Activated B cell treated with CpG ODN at 0.5 μM for 24 hours (primary cell): ENCODE measurements at regions of chr7 and their contacts with region 1.

Region 1: DNA sequence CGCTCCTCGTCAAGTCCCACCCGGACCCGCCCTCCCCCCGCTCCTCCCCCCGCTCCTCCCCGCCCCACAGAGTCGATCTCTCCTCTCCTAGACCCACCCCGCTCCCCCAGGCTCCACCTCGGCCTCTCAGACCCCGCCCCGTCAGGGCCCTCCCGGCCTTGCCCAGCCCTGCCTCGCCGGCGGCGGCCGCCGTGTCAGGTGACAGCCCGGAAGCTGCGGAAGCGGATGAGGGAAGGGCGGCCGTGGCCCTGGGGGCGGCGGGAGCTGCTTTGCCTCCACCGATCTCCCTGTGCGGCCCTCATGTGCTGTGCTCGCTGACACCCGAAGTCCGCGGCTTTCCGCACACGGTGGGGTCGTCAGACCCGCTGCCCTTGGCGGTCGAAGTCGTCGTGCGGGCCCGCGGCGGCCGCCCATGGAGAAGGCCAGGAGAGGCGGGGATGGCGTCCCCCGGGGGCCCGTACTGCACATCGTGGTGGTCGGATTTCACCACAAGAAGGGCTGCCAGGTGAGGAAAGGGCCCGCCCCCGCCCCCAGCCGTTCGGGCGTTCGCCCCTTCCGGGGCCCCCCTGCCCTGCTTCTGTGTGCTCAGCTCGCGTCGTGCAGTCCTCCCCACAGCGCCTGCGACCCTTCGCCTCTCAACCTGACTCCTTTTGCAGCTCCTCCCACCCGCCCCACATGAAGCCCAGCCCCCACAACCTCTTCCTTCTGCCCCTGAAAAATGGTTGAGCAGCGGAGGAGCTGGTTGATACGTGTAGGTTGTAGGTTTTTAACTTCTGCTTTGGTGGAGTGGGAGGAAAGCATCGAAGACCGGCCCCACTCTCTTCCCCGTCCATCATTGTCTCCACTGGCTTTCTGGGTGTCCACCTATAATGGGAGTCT is at the start of gene AVL9:
- DNase-seq: peak; percentile 98
- ATAC-seq: peak; percentile 96
- H3K4me3 Mint-ChIP-seq: peak within 1 kb of the TSS; percentile 93
- H3K27ac Mint-ChIP-seq: peak within 1 kb of the TSS; percentile 96
- H3K4me1 Mint-ChIP-seq: peaks cover 41% of the 10 kb centered on the region
- H3K27me3 Mint-ChIP-seq: no peaks in the 10 kb centered on the region
- CTCF ChIP-seq: no peak
- total RNA-seq, gene AVL9: 36.6 and 52.5 TPM in 2 replicates

Region 2: GRCh38 chr7:30594549-30595435 is 1900.7 kb before region 1 on chr7 and contains the start of gene GARS1:
- CTCF ChIA-PET with region 1: no interaction called
- POLR2A ChIA-PET with region 1: interaction called, 4 read pairs
- intact Hi-C with region 1: loop called (anchors 10 kb)
- DNase-seq: peak; percentile 89
- ATAC-seq: peak; percentile 82
- H3K4me3 Mint-ChIP-seq: peak within 1 kb of the TSS; percentile 99
- H3K27ac Mint-ChIP-seq: peak within 1 kb of the TSS; percentile 99
- H3K4me1 Mint-ChIP-seq: peaks cover 55% of the 10 kb centered on the region
- H3K27me3 Mint-ChIP-seq: no peaks in the 10 kb centered on the region
- CTCF ChIP-seq: no peak
- total RNA-seq, gene GARS1: 197 and 214 TPM in 2 replicates

Region 3: GRCh38 chr7:31971049-31971667 is 524.4 kb before region 1 on chr7:
- CTCF ChIA-PET with region 1: no interaction called
- POLR2A ChIA-PET with region 1: no interaction called
- intact Hi-C with region 1: no loop called
- DNase-seq: no peak
- ATAC-seq: no peak
- H3K4me3 Mint-ChIP-seq: no peak overlapping the region
- H3K27ac Mint-ChIP-seq: no peak overlapping the region
- H3K4me1 Mint-ChIP-seq: no peaks in the 10 kb centered on the region
- H3K27me3 Mint-ChIP-seq: no peaks in the 10 kb centered on the region
- CTCF ChIP-seq: no peak

Region 4: GRCh38 chr7:32539919-32540531 is 44.5 kb after region 1 on chr7:
- CTCF ChIA-PET with region 1: no interaction called
- POLR2A ChIA-PET with region 1: interaction called, 11 read pairs
- intact Hi-C with region 1: loop called (anchors 2 kb)
- DNase-seq: no peak
- ATAC-seq: no peak
- H3K4me3 Mint-ChIP-seq: no peak overlapping the region
- H3K27ac Mint-ChIP-seq: no peak overlapping the region
- H3K4me1 Mint-ChIP-seq: peaks cover 12% of the 10 kb centered on the region
- H3K27me3 Mint-ChIP-seq: no peaks in the 10 kb centered on the region
- CTCF ChIP-seq: no peak

Region 5: GRCh38 chr7:32639122-32639521 is 143.6 kb after region 1 on chr7:
- CTCF ChIA-PET with region 1: no interaction called
- POLR2A ChIA-PET with region 1: no interaction called
- intact Hi-C with region 1: loop called (anchors 2 kb)
- DNase-seq: no peak
- ATAC-seq: no peak
- H3K4me3 Mint-ChIP-seq: no peak overlapping the region
- H3K27ac Mint-ChIP-seq: peak overlapping the region; percentile 37
- H3K4me1 Mint-ChIP-seq: peaks cover 36% of the 10 kb centered on the region
- H3K27me3 Mint-ChIP-seq: peaks cover 2% of the 10 kb centered on the region
- CTCF ChIP-seq: no peak

Region 6: GRCh38 chr7:33009734-33010133 is 514.2 kb after region 1 on chr7:
- CTCF ChIA-PET with region 1: no interaction called
- POLR2A ChIA-PET with region 1: no interaction called
- intact Hi-C with region 1: no loop called
- DNase-seq: no peak
- ATAC-seq: no peak
- H3K4me3 Mint-ChIP-seq: no peak overlapping the region
- H3K27ac Mint-ChIP-seq: peak overlapping the region; percentile 4
- H3K4me1 Mint-ChIP-seq: no peaks in the 10 kb centered on the region
- H3K27me3 Mint-ChIP-seq: no peaks in the 10 kb centered on the region
- CTCF ChIP-seq: no peak

Region 7: DNA sequence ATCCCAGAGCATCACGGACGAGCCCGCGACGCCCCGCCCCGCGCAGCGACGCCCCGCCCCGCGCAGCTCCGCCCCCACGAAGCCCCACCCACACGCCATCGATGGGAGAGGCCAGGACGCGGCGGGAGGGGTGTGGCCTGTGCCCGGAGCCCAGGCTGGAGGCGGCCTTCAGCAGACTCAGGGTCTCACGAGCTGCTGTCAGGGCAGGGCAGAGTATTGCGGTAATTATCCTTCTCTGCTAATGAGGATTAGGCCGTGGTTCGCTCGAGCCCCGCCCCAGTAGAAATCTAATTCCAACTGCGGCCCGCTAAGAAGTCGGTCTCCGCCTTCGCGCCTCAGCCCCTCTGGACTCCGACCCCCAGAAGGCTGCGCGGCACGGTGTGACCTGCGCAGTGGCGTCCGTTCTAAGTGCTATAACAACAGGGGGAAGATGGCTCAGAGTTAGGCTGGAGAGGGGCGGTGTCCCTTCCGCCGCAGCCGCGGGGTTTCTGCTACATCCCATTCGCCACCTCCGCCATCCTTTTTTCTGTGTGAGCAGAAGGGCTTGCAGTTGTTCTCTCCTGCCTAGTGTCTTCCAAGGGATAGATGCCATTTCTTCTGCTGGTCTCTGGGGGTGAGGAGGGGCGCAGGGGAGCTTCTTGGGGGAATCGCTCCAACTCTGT is 567.4 kb after region 1 on chr7:
- CTCF ChIA-PET with region 1: no interaction called
- POLR2A ChIA-PET with region 1: interaction called, 3 read pairs
- intact Hi-C with region 1: loop called (anchors 2 kb)
- DNase-seq: peak; percentile 91
- ATAC-seq: peak; percentile 93
- H3K4me3 Mint-ChIP-seq: peak overlapping the region; percentile 91
- H3K27ac Mint-ChIP-seq: peak overlapping the region; percentile 89
- H3K4me1 Mint-ChIP-seq: peaks cover 43% of the 10 kb centered on the region
- H3K27me3 Mint-ChIP-seq: no peaks in the 10 kb centered on the region
- CTCF ChIP-seq: no peak